Common myeloid progenitor, CD34-positive (primary cell): ENCODE measurements at regions of chr17 and their contacts with region 1.

Region 1: GRCh38 chr17:44210342-44211192 is 8.9 kb downstream of the UBTF start:
- DNase-seq: peak; percentile 90 to 96 (median 94)
- H3K4me3 ChIP-seq: peak overlapping the region in 1 of 7 experiments; percentile 17
- H3K27ac ChIP-seq: no peak overlapping the region
- H3K4me1 ChIP-seq: peaks cover 0 to 15% (median 11%) of the 10 kb centered on the region in 4 experiments
- H3K27me3 ChIP-seq: no peaks in the 10 kb centered on the region

Region 2: GRCh38 chr17:44024271-44024663 is 186.3 kb before region 1 on chr17:
- CTCF ChIA-PET with region 1: no interaction called
- POLR2A ChIA-PET with region 1: no interaction called
- DNase-seq: no peak
- H3K4me3 ChIP-seq: no peak overlapping the region
- H3K27ac ChIP-seq: no peak overlapping the region
- H3K4me1 ChIP-seq: no peaks in the 10 kb centered on the region
- H3K27me3 ChIP-seq: no peaks in the 10 kb centered on the region

Region 3: DNA sequence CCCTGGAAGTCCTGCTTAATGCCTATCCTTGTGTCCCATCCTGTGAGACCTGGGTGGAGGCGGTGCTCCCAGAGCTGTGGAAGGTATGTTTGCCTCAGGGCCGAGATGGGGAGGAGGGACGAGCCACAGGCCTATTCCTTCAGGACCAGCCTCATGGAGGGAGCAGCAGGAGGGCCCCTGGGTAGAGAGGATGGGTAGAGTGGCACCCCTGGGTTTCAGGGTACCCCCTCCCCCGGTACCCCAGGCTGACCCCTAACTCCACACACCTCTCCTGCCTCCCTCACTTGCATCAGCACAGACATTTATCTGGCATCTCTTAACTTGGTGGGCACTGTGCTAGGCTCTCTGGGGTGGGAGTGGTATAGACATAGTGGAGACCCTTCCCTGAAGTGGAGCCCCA is 32.9 kb before region 1 on chr17:
- CTCF ChIA-PET with region 1: no interaction called
- POLR2A ChIA-PET with region 1: no interaction called
- DNase-seq: no peak
- H3K4me3 ChIP-seq: no peak overlapping the region
- H3K27ac ChIP-seq: no peak overlapping the region
- H3K4me1 ChIP-seq: no peaks in the 10 kb centered on the region
- H3K27me3 ChIP-seq: no peaks in the 10 kb centered on the region

Region 4: GRCh38 chr17:44199553-44200477 is 10.8 kb before region 1 on chr17 and contains the start of gene ATXN7L3:
- CTCF ChIA-PET with region 1: interaction called, 25 read pairs
- POLR2A ChIA-PET with region 1: no interaction called
- DNase-seq: peak; percentile 98 to 99 (median 99)
- H3K4me3 ChIP-seq: peak within 1 kb of the TSS; percentile 72 to 95 (median 82)
- H3K27ac ChIP-seq: peak within 1 kb of the TSS; percentile 72 to 92
- H3K4me1 ChIP-seq: peaks cover 6 to 49% (median 45%) of the 10 kb centered on the region in 4 experiments
- H3K27me3 ChIP-seq: no peaks in the 10 kb centered on the region

Region 5: GRCh38 chr17:44308865-44309264 is 98.3 kb after region 1 on chr17:
- CTCF ChIA-PET with region 1: interaction called, 11 read pairs
- POLR2A ChIA-PET with region 1: no interaction called
- DNase-seq: peak in 1 of 3 donors; percentile 30
- H3K4me3 ChIP-seq: peak overlapping the region in 5 of 7 experiments; percentile 36 to 71 (median 54)
- H3K27ac ChIP-seq: no peak overlapping the region
- H3K4me1 ChIP-seq: peaks cover 0 to 15% (median 13%) of the 10 kb centered on the region in 4 experiments
- H3K27me3 ChIP-seq: peaks cover 6 to 25% (median 10%) of the 10 kb centered on the region in 5 experiments

Region 6: DNA sequence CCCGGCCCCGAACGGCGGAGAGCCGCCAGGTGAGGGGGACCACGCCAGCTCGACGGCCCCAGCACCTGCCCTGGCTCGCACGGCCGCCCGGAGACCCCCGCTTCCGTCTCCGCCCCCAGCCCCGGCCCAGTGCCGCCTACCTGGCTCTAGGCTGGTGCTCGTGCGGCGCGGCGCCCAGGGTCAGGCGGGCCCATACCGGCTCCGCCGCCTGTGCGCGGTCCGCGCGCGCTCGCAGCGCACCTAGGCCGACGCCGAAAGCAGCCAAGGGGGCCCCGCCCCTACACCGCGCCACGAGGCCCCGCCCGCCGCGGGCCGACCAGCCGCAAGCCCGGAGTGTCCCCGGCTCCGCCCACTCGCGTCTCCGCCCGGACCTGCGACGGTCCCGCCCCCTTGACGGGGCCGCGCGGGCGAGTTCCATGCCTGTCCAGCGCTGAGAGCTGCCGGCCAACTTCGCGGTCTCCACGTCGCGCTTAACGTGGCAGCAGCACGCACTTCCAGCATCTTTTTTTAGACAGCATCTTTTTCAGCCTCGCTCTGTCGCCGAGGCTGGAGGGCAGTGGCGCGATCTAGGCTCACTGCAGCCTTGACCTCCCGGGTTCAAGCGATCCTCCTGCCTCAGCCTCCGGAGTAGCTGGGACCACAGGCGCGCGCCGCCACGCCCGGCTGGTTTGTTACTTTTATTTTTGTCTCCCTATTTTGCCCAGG is 114.2 kb after region 1 on chr17 and contains the start of gene SLC25A39:
- CTCF ChIA-PET with region 1: interaction called, 67 read pairs
- POLR2A ChIA-PET with region 1: no interaction called
- DNase-seq: peak; percentile 89 to 92 (median 92)
- H3K4me3 ChIP-seq: peak within 1 kb of the TSS; percentile 51 to 87 (median 78)
- H3K27ac ChIP-seq: peak within 1 kb of the TSS in 1 of 2 experiments; percentile 66
- H3K4me1 ChIP-seq: peaks cover 0 to 29% (median 25%) of the 10 kb centered on the region in 4 experiments
- H3K27me3 ChIP-seq: no peaks in the 10 kb centered on the region

Region 7: GRCh38 chr17:44331249-44331760 is 120.7 kb after region 1 on chr17:
- CTCF ChIA-PET with region 1: interaction called, 67 read pairs
- POLR2A ChIA-PET with region 1: no interaction called
- DNase-seq: peak; percentile 75 to 83 (median 79)
- H3K4me3 ChIP-seq: peak overlapping the region in 2 of 7 experiments; percentile 24 to 42
- H3K27ac ChIP-seq: no peak overlapping the region
- H3K4me1 ChIP-seq: peaks cover 4 to 12% (median 6%) of the 10 kb centered on the region in 4 experiments
- H3K27me3 ChIP-seq: no peaks in the 10 kb centered on the region

Region 8: GRCh38 chr17:44344939-44345453 is 134.4 kb after region 1 on chr17 and contains the start of gene GRN:
- CTCF ChIA-PET with region 1: interaction called, 84 read pairs
- POLR2A ChIA-PET with region 1: no interaction called
- DNase-seq: peak; percentile 90 to 93 (median 93)
- H3K4me3 ChIP-seq: peak within 1 kb of the TSS; percentile 78 to 97 (median 87)
- H3K27ac ChIP-seq: peak within 1 kb of the TSS in 1 of 2 experiments; percentile 75
- H3K4me1 ChIP-seq: peaks cover 5 to 30% (median 22%) of the 10 kb centered on the region in 4 experiments
- H3K27me3 ChIP-seq: peaks cover 0 to 3% (median 0%) of the 10 kb centered on the region in 5 experiments

Region 9: DNA sequence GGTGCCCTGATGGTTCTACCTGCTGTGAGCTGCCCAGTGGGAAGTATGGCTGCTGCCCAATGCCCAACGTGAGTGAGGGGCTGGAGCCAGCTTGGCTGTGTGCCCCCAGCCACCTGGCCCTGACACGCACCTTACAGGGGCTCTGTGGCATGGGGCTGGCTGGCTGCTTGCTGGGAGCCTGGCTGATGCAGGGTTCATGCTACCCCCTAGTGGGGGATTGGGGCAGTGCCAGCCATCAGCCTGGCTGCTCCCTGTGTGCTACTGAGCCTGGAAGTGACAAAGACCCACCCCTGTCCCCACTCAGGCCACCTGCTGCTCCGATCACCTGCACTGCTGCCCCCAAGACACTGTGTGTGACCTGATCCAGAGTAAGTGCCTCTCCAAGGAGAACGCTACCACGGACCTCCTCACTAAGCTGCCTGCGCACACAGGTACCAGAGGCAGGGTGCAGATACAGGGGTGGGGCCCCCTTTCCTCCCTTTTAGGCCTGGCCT is 140.2 kb after region 1 on chr17:
- CTCF ChIA-PET with region 1: interaction called, 84 read pairs
- POLR2A ChIA-PET with region 1: no interaction called
- DNase-seq: peak; percentile 72 to 81 (median 73)
- H3K4me3 ChIP-seq: no peak overlapping the region
- H3K27ac ChIP-seq: no peak overlapping the region
- H3K4me1 ChIP-seq: peaks cover 5 to 32% (median 24%) of the 10 kb centered on the region in 4 experiments
- H3K27me3 ChIP-seq: peaks cover 0 to 4% (median 0%) of the 10 kb centered on the region in 5 experiments